A549 (cell line): ENCODE measurements at regions of chr12 and their contacts with region 1.

Region 1: DNA sequence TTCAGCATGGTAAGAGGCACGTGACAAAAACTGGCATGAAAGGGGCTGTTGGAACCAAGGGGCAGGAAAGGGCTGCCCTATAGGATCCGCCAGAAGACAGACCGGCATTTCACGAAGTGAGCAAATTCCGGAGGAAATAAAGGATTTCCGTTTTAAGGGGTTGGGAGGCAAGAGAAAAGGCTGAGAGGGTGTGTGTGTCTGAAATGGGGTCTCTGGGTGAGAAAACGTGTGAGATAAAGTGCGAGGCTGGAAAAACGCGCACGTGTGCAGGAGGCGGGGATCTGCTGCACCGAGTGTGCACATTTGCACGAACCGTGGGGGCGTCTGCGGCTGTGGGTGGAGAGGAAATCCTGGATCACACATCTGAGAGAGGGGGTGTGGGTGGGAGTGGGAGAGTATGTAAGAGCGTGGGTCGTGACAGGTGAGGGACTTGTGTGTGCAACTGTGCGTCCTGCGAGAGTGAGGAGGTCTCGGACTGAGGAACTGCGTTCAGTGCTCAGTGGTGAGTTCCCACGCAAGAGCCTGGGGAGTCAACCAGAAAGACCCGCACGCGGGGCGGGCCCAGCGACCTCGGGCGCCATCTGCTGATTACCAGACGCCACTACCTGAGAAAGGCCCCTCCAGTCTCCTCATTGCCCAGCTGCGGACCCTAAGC is 37.0 kb upstream of the P2RX7 start:
- DNase-seq: peak; percentile 64 to 96
- ATAC-seq: peak; percentile 97 to 98
- H3K4me3 ChIP-seq: peak overlapping the region; percentile 39
- H3K27ac ChIP-seq: peak overlapping the region; percentile 7 to 68; a peak in 4 of 6 replicates
- H3K4me1 ChIP-seq: peaks cover 8% of the 10 kb centered on the region; the same call in 1 of the 3 replicates
- CTCF ChIP-seq: peak; percentile 86
- EP300 ChIP-seq: no peak
- POLR2A ChIP-seq: no peak
- RAD21 ChIP-seq: peak; percentile 76 to 78

Region 2: GRCh38 chr12:120925740-120926583 is 169.7 kb before region 1 on chr12:
- CTCF ChIA-PET with region 1: no interaction called
- POLR2A ChIA-PET with region 1: no interaction called
- DNase-seq: no peak
- ATAC-seq: peak; percentile 43 to 57; a peak in 3 of 6 replicates
- H3K4me3 ChIP-seq: no peak overlapping the region
- H3K27ac ChIP-seq: no peak overlapping the region
- H3K4me1 ChIP-seq: no peaks in the 10 kb centered on the region
- CTCF ChIP-seq: no peak
- EP300 ChIP-seq: no peak
- POLR2A ChIP-seq: no peak
- RAD21 ChIP-seq: no peak

Region 3: DNA sequence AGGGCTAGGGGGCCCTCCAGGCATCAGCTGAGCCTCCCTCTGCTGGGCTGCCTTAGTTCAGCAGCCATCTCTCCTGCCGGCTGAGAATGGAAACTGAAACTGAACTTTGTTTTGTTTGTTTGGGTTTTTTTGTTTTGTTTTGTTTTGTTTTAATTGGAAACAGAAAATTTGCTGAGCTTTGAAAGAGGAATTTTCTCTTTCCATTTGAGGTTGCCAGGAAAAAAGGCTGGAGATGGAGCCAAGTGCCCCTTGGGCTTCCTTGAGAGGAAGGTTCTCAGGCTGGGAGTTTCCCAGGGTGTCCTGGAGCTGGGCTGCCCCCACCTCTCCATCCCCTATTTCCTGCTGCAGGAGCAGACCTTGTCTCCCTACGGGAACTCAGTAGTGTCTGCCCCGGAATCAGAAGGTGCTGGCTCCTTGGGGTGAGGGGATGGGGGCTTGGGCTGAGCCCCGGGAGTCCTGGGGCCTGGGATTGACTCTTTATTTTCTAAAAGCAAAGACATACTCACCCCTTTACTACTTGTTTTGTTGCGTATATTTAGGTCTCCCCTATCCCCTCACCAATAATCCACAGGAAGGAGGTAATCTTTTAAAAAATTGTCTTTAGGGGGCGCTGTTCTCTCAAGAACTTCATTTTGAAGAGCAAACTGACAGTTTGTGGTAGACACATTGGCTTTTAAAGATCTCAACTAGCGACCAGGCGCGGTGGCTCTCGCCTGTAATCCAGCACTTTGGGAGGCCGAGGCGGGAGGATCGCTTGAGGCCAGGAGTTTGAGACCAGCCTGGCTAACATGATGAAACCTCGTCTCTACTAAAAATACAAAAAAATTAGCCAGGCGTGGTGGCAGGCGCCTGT is 35.3 kb before region 1 on chr12:
- CTCF ChIA-PET with region 1: interaction called, 40 read pairs
- POLR2A ChIA-PET with region 1: no interaction called
- DNase-seq: peak; percentile 38 to 76
- ATAC-seq: peak; percentile 86 to 88
- H3K4me3 ChIP-seq: 0 out of 3 replicates have a peak overlapping the region, but pooled peaks have one; percentile 11
- H3K27ac ChIP-seq: peak overlapping the region; percentile 48 to 84; a peak in 5 of 6 replicates
- H3K4me1 ChIP-seq: peaks cover 6% of the 10 kb centered on the region; the same call in 1 of the 3 replicates
- CTCF ChIP-seq: peak; percentile 68
- EP300 ChIP-seq: no peak
- POLR2A ChIP-seq: no peak
- RAD21 ChIP-seq: peak; percentile 61 to 67

Region 4: GRCh38 chr12:121079736-121080272 is 15.9 kb before region 1 on chr12:
- CTCF ChIA-PET with region 1: interaction called, 19 read pairs
- POLR2A ChIA-PET with region 1: no interaction called
- DNase-seq: no peak
- ATAC-seq: peak in 1 of 2 experiments; percentile 24; a peak in 4 of 6 replicates
- H3K4me3 ChIP-seq: no peak overlapping the region
- H3K27ac ChIP-seq: no peak overlapping the region
- H3K4me1 ChIP-seq: no peaks in the 10 kb centered on the region
- CTCF ChIP-seq: no peak
- EP300 ChIP-seq: no peak
- POLR2A ChIP-seq: no peak
- RAD21 ChIP-seq: no peak